Colonic mucosa (tissue), 4 donors: ENCODE measurements at regions of chr11 and their contacts with region 1.

Region 1: GRCh38 chr11:10208131-10208575 is 85.9 kb downstream of the SBF2 start:
- DNase-seq: no peak
- H3K4me3 ChIP-seq: no peak overlapping the region
- H3K27ac ChIP-seq: no peak overlapping the region
- H3K4me1 ChIP-seq: no peaks in the 10 kb centered on the region
- H3K27me3 ChIP-seq: no peaks in the 10 kb centered on the region
- CTCF ChIP-seq: peak; percentile 63

Region 2: GRCh38 chr11:9144830-9145229 is 1063.3 kb before region 1 on chr11:
- intact Hi-C with region 1: no loop called
- DNase-seq: no peak
- H3K4me3 ChIP-seq: no peak overlapping the region
- H3K27ac ChIP-seq: no peak overlapping the region
- H3K4me1 ChIP-seq: no peaks in the 10 kb centered on the region
- H3K27me3 ChIP-seq: no peaks in the 10 kb centered on the region
- CTCF ChIP-seq: no peak

Region 3: GRCh38 chr11:10307442-10308207 is 99.5 kb after region 1 on chr11:
- intact Hi-C with region 1: loop called (anchors 5 kb)
- DNase-seq: peak; percentile 85
- H3K4me3 ChIP-seq: peak overlapping the region; percentile 78
- H3K27ac ChIP-seq: peak overlapping the region; percentile 97
- H3K4me1 ChIP-seq: peaks cover 5% of the 10 kb centered on the region
- H3K27me3 ChIP-seq: no peaks in the 10 kb centered on the region
- CTCF ChIP-seq: peak; percentile 97

Region 4: GRCh38 chr11:10366568-10367370 is 158.6 kb after region 1 on chr11:
- intact Hi-C with region 1: loop called (anchors 5 kb)
- DNase-seq: peak; percentile 86
- H3K4me3 ChIP-seq: no peak overlapping the region
- H3K27ac ChIP-seq: no peak overlapping the region
- H3K4me1 ChIP-seq: no peaks in the 10 kb centered on the region
- H3K27me3 ChIP-seq: no peaks in the 10 kb centered on the region
- CTCF ChIP-seq: peak; percentile 82